ENCODE measurements at regions of chrX and their contacts with region 1.

Region 1: GRCh38 chrX:83997781-83998180 is 136.8 kb downstream of the CYLC1 start:
- DNase-seq: no peak
- H3K4me3 ChIP-seq: no peak overlapping the region
- H3K27ac ChIP-seq: no peak overlapping the region
- H3K4me1 ChIP-seq: no peaks in the 10 kb centered on the region
- H3K27me3 ChIP-seq: no peaks in the 10 kb centered on the region
- CTCF ChIP-seq: no peak
- EP300 ChIP-seq: no peak
- POLR2A ChIP-seq: no peak

Region 2: GRCh38 chrX:83984961-83985360 is 12.8 kb before region 1 on chrX:
- in situ Hi-C with region 1: no loop called
- intact Hi-C with region 1: loop called (anchors 1 kb)
- DNase-seq: no peak
- H3K4me3 ChIP-seq: no peak overlapping the region
- H3K27ac ChIP-seq: no peak overlapping the region
- H3K4me1 ChIP-seq: no peaks in the 10 kb centered on the region
- H3K27me3 ChIP-seq: no peaks in the 10 kb centered on the region
- CTCF ChIP-seq: no peak
- EP300 ChIP-seq: no peak
- POLR2A ChIP-seq: no peak

Measured in transverse colon (tissue), 4 donors.